Dorsolateral prefrontal cortex (tissue), 120 donors: ENCODE measurements at regions of chr2 and their contacts with region 1.

Region 1: GRCh38 chr2:26764078-26764887 is at the start of gene SLC35F6:
- DNase-seq: peak; percentile 65 to 90 (median 82)
- H3K4me3 ChIP-seq: peak within 1 kb of the TSS; percentile 67 to 100 (median 95)
- H3K27ac ChIP-seq: peak within 1 kb of the TSS; percentile 60 to 97 (median 91)
- H3K27me3 ChIP-seq: no peaks in the 10 kb centered on the region
- CTCF ChIP-seq: peak in 33 of 56 donors; percentile 10 to 57 (median 32)
- total RNA-seq, gene SLC35F6: 21.6 to 37.7 (median 26.8) TPM

Region 2: GRCh38 chr2:26942543-26943295 is 178.4 kb after region 1 on chr2:
- intact Hi-C with region 1: loop called in 1 of 2 experiments (anchors 10 kb)
- DNase-seq: peak; percentile 72 to 90 (median 80)
- H3K4me3 ChIP-seq: no peak overlapping the region
- H3K27ac ChIP-seq: peak overlapping the region in 15 of 59 donors; percentile 11 to 64 (median 43)
- H3K27me3 ChIP-seq: no peaks in the 10 kb centered on the region
- CTCF ChIP-seq: peak; percentile 77 to 95 (median 90)